Transverse colon (tissue), 4 donors: ENCODE measurements at regions of chr13 and their contacts with region 1.

Region 1: DNA sequence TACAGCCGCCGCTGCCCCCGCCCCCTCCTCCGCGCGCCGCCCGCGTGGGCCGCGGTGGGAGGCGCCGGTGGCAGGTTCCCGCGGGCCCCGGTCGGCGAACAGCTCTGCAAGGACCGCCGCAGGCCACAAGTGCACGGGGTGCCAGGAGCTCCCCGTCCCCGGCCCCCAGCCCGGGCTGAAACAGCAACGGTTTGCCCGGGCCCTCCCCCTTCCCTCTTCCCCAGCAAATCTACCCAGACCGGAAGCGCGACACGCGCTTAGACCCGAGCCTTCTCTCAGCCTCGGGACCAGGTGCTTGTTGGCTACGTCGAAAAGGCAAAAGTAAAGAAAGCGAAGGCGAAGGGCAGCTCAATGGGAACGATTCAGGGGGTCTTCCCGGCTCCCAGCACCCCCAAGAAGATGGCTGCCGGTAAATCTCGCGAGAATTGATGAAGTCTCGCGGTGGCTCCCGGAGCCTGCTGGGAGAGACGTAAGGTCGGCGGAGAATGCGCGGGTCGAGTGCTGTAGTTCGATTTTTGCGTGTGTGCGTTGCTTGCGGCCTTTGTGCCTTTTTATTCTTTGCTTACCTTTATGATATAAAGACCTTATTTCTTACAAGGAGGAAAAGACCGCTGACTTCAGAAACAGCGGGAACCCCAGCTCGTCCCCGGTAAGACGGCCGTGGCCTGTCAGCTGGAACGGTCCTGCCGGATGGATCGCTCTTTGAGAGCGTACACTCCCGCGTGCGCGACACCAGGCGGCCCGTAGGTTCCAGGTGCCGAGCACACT is at the start of gene RBM26:
- DNase-seq: peak; percentile 94
- H3K4me3 ChIP-seq: peak within 1 kb of the TSS; percentile 65 to 97 (median 91)
- H3K27ac ChIP-seq: peak within 1 kb of the TSS; percentile 95 to 98 (median 96)
- H3K4me1 ChIP-seq: peaks cover 28 to 73% (median 48%) of the 10 kb centered on the region in 4 donors
- H3K27me3 ChIP-seq: no peaks in the 10 kb centered on the region
- CTCF ChIP-seq: peak in 2 of 5 experiments; percentile 44
- EP300 ChIP-seq: no peak
- POLR2A ChIP-seq: peak; percentile 70
- total RNA-seq, gene RBM26: 13.9 to 52.7 (median 45.1) TPM

Region 2: DNA sequence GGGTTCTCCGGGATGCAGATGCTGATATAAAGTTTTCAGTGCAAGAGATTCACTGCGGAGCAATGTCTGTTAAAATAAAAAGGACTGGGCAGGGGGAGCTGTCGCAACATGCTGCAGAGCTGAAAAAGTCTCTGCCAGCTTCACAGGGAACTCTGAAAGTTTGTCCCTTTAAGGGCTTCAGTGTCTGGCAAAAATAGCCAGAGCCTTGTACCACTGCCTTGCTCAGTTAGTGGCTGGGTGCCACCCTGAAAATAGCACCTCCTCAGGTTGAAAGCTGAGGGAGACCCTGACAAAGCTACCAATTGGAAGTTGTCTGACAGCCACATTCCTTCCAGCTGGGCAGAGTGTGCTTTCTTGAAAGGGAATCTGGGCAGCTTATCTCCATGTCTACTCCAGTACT is 72.0 kb after region 1 on chr13:
- in situ Hi-C with region 1: no loop called
- intact Hi-C with region 1: loop called (anchors 10 kb)
- DNase-seq: no peak
- H3K4me3 ChIP-seq: no peak overlapping the region
- H3K27ac ChIP-seq: no peak overlapping the region
- H3K4me1 ChIP-seq: peaks cover 3 to 11% (median 8%) of the 10 kb centered on the region in 4 donors
- H3K27me3 ChIP-seq: no peaks in the 10 kb centered on the region
- CTCF ChIP-seq: no peak
- EP300 ChIP-seq: no peak
- POLR2A ChIP-seq: no peak